ENCODE measurements at regions of chr6 and their contacts with region 1.

Region 1: GRCh38 chr6:79672631-79673111 is 41.5 kb downstream of the SH3BGRL2 start:
- DNase-seq: peak in 5 of 9 donors; percentile 8 to 54 (median 45)
- ATAC-seq: peak; percentile 47
- H3K4me3 ChIP-seq: no peak overlapping the region
- H3K4me3 Mint-ChIP-seq: peak overlapping the region in 2 of 10 donors; percentile 60 to 65
- H3K27ac ChIP-seq: no peak overlapping the region
- H3K27ac Mint-ChIP-seq: peak overlapping the region in 7 of 9 donors; percentile 10 to 83 (median 56)
- H3K4me1 ChIP-seq: peaks cover 0 to 31% of the 10 kb centered on the region in 2 donors
- H3K4me1 Mint-ChIP-seq: peaks cover 16 to 53% (median 43%) of the 10 kb centered on the region in 7 donors
- H3K27me3 ChIP-seq: no peaks in the 10 kb centered on the region
- H3K27me3 Mint-ChIP-seq: no peaks in the 10 kb centered on the region

Region 2: GRCh38 chr6:79078075-79079025 is 594.3 kb before region 1 on chr6 and contains the start of gene PHIP:
- CTCF ChIA-PET with region 1: no interaction called
- POLR2A ChIA-PET with region 1: interaction called, 5 read pairs
- intact Hi-C with region 1: loop called (anchors 1 to 5 kb)
- DNase-seq: peak; percentile 89 to 97 (median 94)
- ATAC-seq: peak; percentile 90
- H3K4me3 ChIP-seq: peak within 1 kb of the TSS; percentile 83
- H3K4me3 Mint-ChIP-seq: peak within 1 kb of the TSS; percentile 92 to 98 (median 94)
- H3K27ac ChIP-seq: peak within 1 kb of the TSS; percentile 98
- H3K27ac Mint-ChIP-seq: peak within 1 kb of the TSS; percentile 93 to 98 (median 95)
- H3K4me1 ChIP-seq: peaks cover 19 to 21% of the 10 kb centered on the region in 2 donors
- H3K4me1 Mint-ChIP-seq: peaks cover 19 to 46% (median 41%) of the 10 kb centered on the region in 7 donors
- H3K27me3 ChIP-seq: no peaks in the 10 kb centered on the region
- H3K27me3 Mint-ChIP-seq: peaks cover 4 to 23% (median 15%) of the 10 kb centered on the region in 5 donors
- total RNA-seq, gene PHIP: 34.0 to 46.8 (median 41.6) TPM

Region 3: DNA sequence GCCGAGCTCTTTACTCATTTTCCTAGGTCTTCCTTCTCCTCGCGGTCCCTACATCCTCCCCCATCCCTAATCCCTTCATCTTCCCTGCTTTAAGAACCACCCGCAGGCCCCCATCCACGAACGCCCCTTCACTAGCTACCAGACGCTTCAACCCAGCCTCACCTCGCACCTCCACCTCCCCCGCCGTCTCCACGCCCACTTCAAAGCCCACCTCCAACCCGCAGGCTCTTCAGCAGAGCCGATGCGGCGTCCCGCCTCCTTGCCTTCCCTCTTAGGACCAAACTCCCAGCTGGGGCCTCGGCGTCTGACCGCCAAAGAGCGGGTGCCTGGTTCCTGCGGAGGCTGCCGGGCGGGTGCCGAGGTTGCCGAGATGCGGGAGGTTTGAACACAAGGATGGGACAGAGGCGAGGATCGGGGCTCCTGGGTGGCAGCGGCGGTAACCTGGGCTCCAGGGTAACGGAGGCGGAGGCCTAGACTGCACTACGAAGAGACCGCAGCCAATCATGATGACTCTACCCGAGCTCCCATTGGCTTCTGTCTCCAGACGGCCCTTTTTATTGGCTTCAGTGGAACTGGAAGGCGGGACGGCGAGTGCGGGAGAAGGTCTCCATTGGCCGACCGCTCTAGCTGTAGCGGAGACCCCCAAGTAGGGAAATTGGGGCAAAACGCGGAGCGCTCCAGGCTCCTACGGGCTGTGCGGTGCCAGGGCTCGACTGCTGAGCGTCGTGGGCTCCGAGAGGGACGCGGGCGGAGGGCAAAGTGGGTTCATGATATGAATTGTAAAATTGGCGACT is 135.5 kb before region 1 on chr6 and contains the start of gene LCA5:
- CTCF ChIA-PET with region 1: interaction called, 3 read pairs
- POLR2A ChIA-PET with region 1: no interaction called
- intact Hi-C with region 1: loop called in 1 of 2 experiments (anchors 1 kb)
- DNase-seq: peak; percentile 65 to 93 (median 89)
- ATAC-seq: peak; percentile 99
- H3K4me3 ChIP-seq: peak within 1 kb of the TSS; percentile 72
- H3K4me3 Mint-ChIP-seq: no peak within 1 kb of the TSS
- H3K27ac ChIP-seq: peak within 1 kb of the TSS; percentile 50
- H3K27ac Mint-ChIP-seq: no peak within 1 kb of the TSS
- H3K4me1 ChIP-seq: peaks cover 4 to 6% of the 10 kb centered on the region in 2 donors
- H3K4me1 Mint-ChIP-seq: peaks cover 0 to 7% (median 0%) of the 10 kb centered on the region in 7 donors
- H3K27me3 ChIP-seq: peaks cover 0 to 4% of the 10 kb centered on the region in 2 donors
- H3K27me3 Mint-ChIP-seq: peaks cover 0 to 20% (median 6%) of the 10 kb centered on the region in 5 donors
- total RNA-seq, gene LCA5: 0.10 to 0.65 (median 0.24) TPM

Region 4: DNA sequence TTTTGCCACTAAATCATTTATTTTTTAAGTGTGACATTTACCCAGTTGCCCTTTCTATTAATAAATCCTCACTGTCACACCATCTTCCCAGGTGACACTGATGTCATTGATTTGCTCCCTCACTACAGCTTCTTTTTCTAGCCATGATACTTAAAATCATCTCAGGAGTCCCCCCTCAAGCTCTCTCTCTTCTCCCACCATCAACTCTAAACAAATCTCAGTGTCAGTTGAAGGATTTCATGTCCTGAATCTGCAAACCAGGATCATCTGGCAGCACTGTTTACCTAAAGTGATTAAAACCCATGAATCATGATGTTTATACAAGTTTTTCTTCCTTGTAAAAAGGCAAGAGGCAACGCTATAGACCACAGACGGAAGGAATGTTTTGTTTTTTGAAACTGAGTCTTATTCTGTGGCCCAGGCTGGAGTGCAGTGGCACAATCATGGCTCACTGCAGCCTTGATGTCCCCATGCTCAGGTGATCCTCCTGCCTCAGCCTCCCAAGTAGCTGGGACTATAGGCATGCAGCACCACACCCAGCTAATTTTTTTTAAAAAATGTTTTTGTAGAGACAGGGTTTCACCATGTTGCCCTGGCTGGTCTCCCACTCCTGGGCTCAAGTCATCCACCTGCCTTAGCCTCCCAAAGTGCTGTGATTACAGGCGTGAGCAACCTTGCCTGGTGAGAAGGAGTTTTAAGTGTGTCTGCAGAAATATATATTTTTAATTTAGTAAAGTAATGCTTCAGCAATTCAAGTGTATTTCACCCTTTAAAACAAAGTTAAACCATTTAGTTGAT is 71.7 kb before region 1 on chr6:
- CTCF ChIA-PET with region 1: no interaction called
- POLR2A ChIA-PET with region 1: no interaction called
- intact Hi-C with region 1: no loop called
- DNase-seq: no peak
- ATAC-seq: no peak
- H3K4me3 ChIP-seq: no peak overlapping the region
- H3K4me3 Mint-ChIP-seq: no peak overlapping the region
- H3K27ac ChIP-seq: no peak overlapping the region
- H3K27ac Mint-ChIP-seq: no peak overlapping the region
- H3K4me1 ChIP-seq: no peaks in the 10 kb centered on the region
- H3K4me1 Mint-ChIP-seq: peaks cover 0 to 5% (median 0%) of the 10 kb centered on the region in 7 donors
- H3K27me3 ChIP-seq: no peaks in the 10 kb centered on the region
- H3K27me3 Mint-ChIP-seq: no peaks in the 10 kb centered on the region

Region 5: DNA sequence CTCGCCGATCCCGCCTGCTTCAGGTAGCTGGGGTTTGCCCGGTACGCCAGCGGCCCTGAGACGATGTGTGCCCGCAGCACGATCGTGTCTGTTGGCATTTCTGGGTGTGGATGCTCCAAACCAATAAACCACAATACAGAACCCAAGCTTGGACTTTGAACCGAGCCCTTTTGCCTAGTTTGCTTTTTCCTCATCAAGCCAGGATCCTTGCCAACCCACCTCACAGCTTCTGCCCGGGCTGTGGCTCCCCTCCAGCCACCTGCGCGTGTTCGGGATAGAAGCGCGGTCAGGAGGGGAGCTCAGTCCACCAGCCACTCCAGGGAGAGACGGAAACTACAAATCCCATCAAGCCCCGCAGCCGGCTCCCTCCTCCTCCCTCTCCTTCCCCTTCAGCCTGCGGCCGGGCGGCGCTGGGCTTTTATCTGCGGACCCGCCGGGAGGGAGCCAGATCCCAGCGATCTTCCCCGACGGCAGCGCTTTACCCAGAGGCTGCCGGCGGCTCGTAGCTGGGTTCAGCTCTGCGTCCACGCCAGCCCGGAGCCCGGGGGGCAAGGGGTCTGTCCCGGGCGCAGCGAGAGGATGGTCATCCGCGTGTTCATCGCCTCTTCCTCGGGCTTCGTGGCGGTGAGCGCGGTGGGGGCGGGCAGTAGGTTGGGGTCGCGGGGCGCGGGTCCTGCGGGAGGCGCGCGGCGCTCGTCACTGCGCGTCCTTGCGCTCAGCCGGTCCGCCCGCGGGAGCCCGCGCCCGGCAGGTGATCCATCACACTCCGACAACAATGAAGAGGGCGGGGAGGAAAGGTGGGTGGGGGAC is 41.6 kb before region 1 on chr6 and contains the start of gene SH3BGRL2:
- CTCF ChIA-PET with region 1: interaction called, 4 read pairs
- POLR2A ChIA-PET with region 1: interaction called, 3 read pairs
- intact Hi-C with region 1: loop called in 1 of 2 experiments (anchors 5 kb)
- DNase-seq: peak in 5 of 9 donors; percentile 10 to 22 (median 16)
- ATAC-seq: peak; percentile 67
- H3K4me3 ChIP-seq: peak within 1 kb of the TSS; percentile 51
- H3K4me3 Mint-ChIP-seq: peak within 1 kb of the TSS; percentile 79 to 93 (median 86)
- H3K27ac ChIP-seq: no peak within 1 kb of the TSS
- H3K27ac Mint-ChIP-seq: peak within 1 kb of the TSS in 1 of 9 donors; percentile 65
- H3K4me1 ChIP-seq: no peaks in the 10 kb centered on the region
- H3K4me1 Mint-ChIP-seq: peaks cover 6 to 16% (median 11%) of the 10 kb centered on the region in 7 donors
- H3K27me3 ChIP-seq: peaks cover 0 to 13% of the 10 kb centered on the region in 2 donors
- H3K27me3 Mint-ChIP-seq: peaks cover 26 to 68% (median 54%) of the 10 kb centered on the region in 5 donors
- total RNA-seq, gene SH3BGRL2: 0.17 to 2.9 (median 1.8) TPM

Region 6: GRCh38 chr6:79694625-79695343 is 22.1 kb after region 1 on chr6:
- CTCF ChIA-PET with region 1: no interaction called
- POLR2A ChIA-PET with region 1: no interaction called
- intact Hi-C with region 1: no loop called
- DNase-seq: no peak
- ATAC-seq: no peak
- H3K4me3 ChIP-seq: no peak overlapping the region
- H3K4me3 Mint-ChIP-seq: no peak overlapping the region
- H3K27ac ChIP-seq: no peak overlapping the region
- H3K27ac Mint-ChIP-seq: no peak overlapping the region
- H3K4me1 ChIP-seq: no peaks in the 10 kb centered on the region
- H3K4me1 Mint-ChIP-seq: no peaks in the 10 kb centered on the region
- H3K27me3 ChIP-seq: no peaks in the 10 kb centered on the region
- H3K27me3 Mint-ChIP-seq: no peaks in the 10 kb centered on the region

Region 7: GRCh38 chr6:79713701-79714322 is 41.1 kb after region 1 on chr6:
- CTCF ChIA-PET with region 1: interaction called, 5 read pairs
- POLR2A ChIA-PET with region 1: no interaction called
- intact Hi-C with region 1: loop called in 1 of 2 experiments (anchors 1 kb)
- DNase-seq: peak in 8 of 9 donors; percentile 14 to 50 (median 37)
- ATAC-seq: peak; percentile 67
- H3K4me3 ChIP-seq: no peak overlapping the region
- H3K4me3 Mint-ChIP-seq: no peak overlapping the region
- H3K27ac ChIP-seq: no peak overlapping the region
- H3K27ac Mint-ChIP-seq: no peak overlapping the region
- H3K4me1 ChIP-seq: no peaks in the 10 kb centered on the region
- H3K4me1 Mint-ChIP-seq: peaks cover 0 to 6% (median 0%) of the 10 kb centered on the region in 7 donors
- H3K27me3 ChIP-seq: no peaks in the 10 kb centered on the region
- H3K27me3 Mint-ChIP-seq: peaks cover 0 to 19% (median 0%) of the 10 kb centered on the region in 5 donors

Measured in naive thymus-derived CD4-positive, alpha-beta T cell (primary cell).